Dendritic cell treated with granulocyte-macrophage colony-stimulating factor and Interleukin-4, amounts not matched to agents 40 ng/mL and 50 ng/mL, for 4 days (primary cell): ENCODE measurements at regions of chr19 and their contacts with region 1.

Region 1: GRCh38 chr19:55703790-55704215 is 28.8 kb downstream of the EPN1 start:
- H3K4me3 Mint-ChIP-seq: no peak overlapping the region
- H3K27ac Mint-ChIP-seq: no peak overlapping the region
- H3K4me1 Mint-ChIP-seq: no peaks in the 10 kb centered on the region
- H3K27me3 Mint-ChIP-seq: peaks cover 9% of the 10 kb centered on the region

Region 2: DNA sequence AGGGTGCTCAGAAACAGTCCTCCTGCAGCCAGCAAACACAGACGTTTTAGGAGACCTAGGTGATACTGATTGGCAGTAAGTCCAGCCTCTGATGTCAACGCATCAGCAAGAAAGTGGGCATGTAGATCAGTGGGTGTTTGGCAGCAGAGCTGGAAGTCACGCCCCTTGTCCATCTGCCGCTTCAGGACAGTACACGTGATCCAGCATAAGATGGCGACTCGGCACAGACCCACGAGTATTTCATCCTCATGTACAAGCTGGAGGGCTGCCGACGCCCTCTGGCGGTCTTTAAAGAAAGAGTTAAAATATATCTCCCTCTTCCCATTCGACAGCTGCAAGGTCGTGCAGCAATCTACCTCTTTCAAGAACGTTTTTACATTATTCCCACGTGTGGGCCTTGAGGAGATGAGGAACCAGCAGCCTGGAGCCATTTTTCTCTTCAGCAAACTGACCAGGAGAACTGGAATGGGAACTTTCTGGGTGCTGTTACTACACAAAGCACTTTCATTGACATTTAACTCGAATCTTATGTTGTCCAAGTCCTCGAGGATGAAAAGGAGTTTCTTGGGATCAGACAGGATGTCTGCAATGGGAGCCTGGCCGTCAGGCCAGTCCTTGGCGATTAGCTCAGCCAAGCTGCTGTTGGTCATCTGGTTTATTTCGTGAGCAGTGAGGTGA is 105.7 kb after region 1 on chr19:
- intact Hi-C with region 1: loop called (anchors 10 kb)
- H3K4me3 Mint-ChIP-seq: no peak overlapping the region
- H3K27ac Mint-ChIP-seq: no peak overlapping the region
- H3K4me1 Mint-ChIP-seq: no peaks in the 10 kb centered on the region
- H3K27me3 Mint-ChIP-seq: no peaks in the 10 kb centered on the region